ENCODE measurements at regions of chr20 and their contacts with region 1.

Region 1: GRCh38 chr20:41173161-41173721 is 35.9 kb downstream of the PLCG1 start:
- DNase-seq: peak; percentile 40 to 58 (median 52)
- H3K4me3 ChIP-seq: no peak overlapping the region
- H3K4me3 Mint-ChIP-seq: no peak overlapping the region
- H3K27ac ChIP-seq: no peak overlapping the region
- H3K27ac Mint-ChIP-seq: no peak overlapping the region
- H3K4me1 ChIP-seq: no peaks in the 10 kb centered on the region
- H3K4me1 Mint-ChIP-seq: no peaks in the 10 kb centered on the region
- H3K27me3 ChIP-seq: peaks cover 0 to 4% of the 10 kb centered on the region in 2 donors
- H3K27me3 Mint-ChIP-seq: peaks cover 22 to 47% (median 23%) of the 10 kb centered on the region in 3 donors
- CTCF ChIP-seq: peak; percentile 95

Region 2: GRCh38 chr20:41228858-41229630 is 55.8 kb after region 1 on chr20:
- intact Hi-C with region 1: loop called in 1 of 2 experiments (anchors 10 kb)
- DNase-seq: no peak
- H3K4me3 ChIP-seq: no peak overlapping the region
- H3K4me3 Mint-ChIP-seq: no peak overlapping the region
- H3K27ac ChIP-seq: no peak overlapping the region
- H3K27ac Mint-ChIP-seq: peak overlapping the region in 1 of 7 donors; percentile 80
- H3K4me1 ChIP-seq: peaks cover 0 to 3% of the 10 kb centered on the region in 2 donors
- H3K4me1 Mint-ChIP-seq: peaks cover 17% of the 10 kb centered on the region
- H3K27me3 ChIP-seq: no peaks in the 10 kb centered on the region
- H3K27me3 Mint-ChIP-seq: peaks cover 1 to 8% (median 3%) of the 10 kb centered on the region in 3 donors
- CTCF ChIP-seq: no peak

Region 3: GRCh38 chr20:41339507-41340326 is 166.5 kb after region 1 on chr20:
- intact Hi-C with region 1: loop called (anchors 1 kb)
- DNase-seq: peak; percentile 48 to 69 (median 62)
- H3K4me3 ChIP-seq: peak overlapping the region in 1 of 3 experiments; percentile 56
- H3K4me3 Mint-ChIP-seq: peak overlapping the region; percentile 69 to 70
- H3K27ac ChIP-seq: no peak overlapping the region
- H3K27ac Mint-ChIP-seq: no peak overlapping the region
- H3K4me1 ChIP-seq: peaks cover 13 to 14% of the 10 kb centered on the region in 2 donors
- H3K4me1 Mint-ChIP-seq: peaks cover 12% of the 10 kb centered on the region
- H3K27me3 ChIP-seq: peaks cover 5 to 20% of the 10 kb centered on the region in 2 donors
- H3K27me3 Mint-ChIP-seq: peaks cover 20 to 53% (median 32%) of the 10 kb centered on the region in 3 donors
- CTCF ChIP-seq: peak; percentile 99

Measured in CD14-positive monocyte (primary cell).